ENCODE measurements at regions of chr2 and their contacts with region 1.

Region 1: DNA sequence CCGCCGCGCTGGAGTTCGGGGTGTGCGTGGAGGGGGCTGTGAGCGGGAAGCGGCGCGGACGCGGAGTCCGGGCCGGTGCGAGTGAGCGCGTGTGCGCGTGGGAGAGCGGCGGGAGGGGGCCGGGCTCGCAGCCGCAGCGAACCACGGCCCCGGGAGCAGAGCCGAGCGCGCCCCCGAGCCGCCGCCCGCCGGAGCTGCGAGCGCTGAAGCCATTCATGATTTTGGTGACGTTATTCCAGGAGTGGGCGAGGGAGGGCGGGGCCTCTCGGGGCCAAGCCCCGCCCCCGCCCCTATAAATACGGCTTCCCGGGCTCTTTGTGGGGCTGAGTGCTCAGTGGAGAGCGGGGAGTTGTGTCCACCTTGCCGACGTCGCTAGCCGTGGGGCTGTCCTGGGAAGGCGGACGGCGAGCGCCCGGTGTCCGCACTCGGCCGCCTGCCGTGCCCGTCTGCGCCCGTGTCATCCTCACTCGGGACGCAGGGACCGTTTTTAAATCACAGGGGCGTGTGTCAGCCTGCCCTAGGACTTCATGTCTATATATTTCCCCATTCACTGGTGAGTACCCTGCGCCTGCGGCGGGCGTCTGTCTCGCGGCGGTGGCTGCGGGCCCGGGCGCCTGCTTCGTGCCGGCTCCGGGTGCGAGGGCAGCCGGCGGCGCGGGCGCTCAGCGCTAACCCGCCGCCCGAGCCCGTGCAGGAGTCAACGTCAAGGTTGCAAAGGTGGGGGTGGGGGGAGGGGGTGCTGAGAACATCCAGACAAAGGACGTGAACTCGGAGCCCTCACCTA is at the start of gene LBH:
- DNase-seq: peak; percentile 41
- H3K4me3 ChIP-seq: peak within 1 kb of the TSS; percentile 80
- CTCF ChIP-seq: no peak

Region 2: GRCh38 chr2:30146438-30147147 is 84.8 kb before region 1 on chr2 and contains the start of gene YPEL5:
- CTCF ChIA-PET with region 1: interaction called, 5 read pairs
- POLR2A ChIA-PET with region 1: interaction called, 13 read pairs
- DNase-seq: peak; percentile 97
- H3K4me3 ChIP-seq: peak within 1 kb of the TSS; percentile 82
- CTCF ChIP-seq: no peak

Region 3: DNA sequence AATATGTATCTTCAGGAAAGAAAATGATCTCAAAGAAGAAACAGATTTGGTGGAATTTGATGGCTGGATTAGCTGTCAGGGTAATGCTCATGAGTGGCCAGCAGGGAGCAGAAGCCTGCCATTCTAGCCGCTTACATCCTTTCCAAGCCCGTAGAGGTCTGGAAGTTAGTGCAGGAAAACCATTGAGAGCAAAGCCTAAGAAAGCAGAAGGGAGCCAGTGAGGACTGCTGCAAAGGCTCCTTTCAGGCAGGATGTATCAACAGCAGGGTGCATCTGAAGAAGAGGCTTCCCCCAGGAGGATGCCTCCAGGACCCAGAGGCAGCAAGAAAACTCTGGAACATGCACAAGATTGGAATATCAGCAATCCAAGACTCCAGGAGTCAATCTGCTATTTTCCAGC is 23.0 kb before region 1 on chr2:
- CTCF ChIA-PET with region 1: interaction called, 71 read pairs
- POLR2A ChIA-PET with region 1: interaction called, 17 read pairs
- DNase-seq: peak; percentile 53
- H3K4me3 ChIP-seq: no peak overlapping the region
- CTCF ChIP-seq: peak; percentile 81

Region 4: GRCh38 chr2:30217644-30218337 is 13.6 kb before region 1 on chr2:
- CTCF ChIA-PET with region 1: interaction called, 12 read pairs
- POLR2A ChIA-PET with region 1: interaction called, 10 read pairs
- DNase-seq: no peak
- H3K4me3 ChIP-seq: no peak overlapping the region
- CTCF ChIP-seq: no peak

Region 5: GRCh38 chr2:30300456-30301221 is 69.2 kb after region 1 on chr2:
- CTCF ChIA-PET with region 1: interaction called, 3 read pairs
- POLR2A ChIA-PET with region 1: interaction called, 14 read pairs
- DNase-seq: peak; percentile 97
- H3K4me3 ChIP-seq: no peak overlapping the region
- CTCF ChIP-seq: no peak

Region 6: DNA sequence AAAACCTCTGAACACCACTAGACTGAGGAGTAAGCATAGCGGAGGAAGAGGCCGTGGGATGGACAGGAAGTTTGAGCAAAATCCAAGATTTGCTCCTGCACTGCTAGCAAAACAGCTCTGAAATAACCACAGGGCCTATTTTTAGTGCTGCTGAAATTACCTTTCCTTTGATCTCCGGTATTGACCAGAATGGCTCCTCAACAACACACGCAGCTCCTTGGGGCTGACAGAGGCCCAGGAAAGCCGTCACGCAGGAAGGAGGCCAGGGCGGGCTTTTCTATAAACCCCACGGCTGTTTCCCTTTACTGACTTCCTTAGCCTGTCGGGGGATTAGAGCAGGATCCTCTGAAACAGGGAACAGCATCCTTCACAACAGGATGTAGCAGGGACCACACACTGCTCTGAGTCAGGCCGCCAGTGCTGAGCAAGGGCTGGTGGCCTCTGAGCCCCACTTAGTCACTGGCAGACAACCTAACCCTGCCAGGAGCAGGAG is 134.8 kb after region 1 on chr2:
- CTCF ChIA-PET with region 1: no interaction called
- POLR2A ChIA-PET with region 1: interaction called, 17 read pairs
- DNase-seq: no peak
- H3K4me3 ChIP-seq: no peak overlapping the region
- CTCF ChIP-seq: no peak

Region 7: GRCh38 chr2:30511122-30512083 is 280.0 kb after region 1 on chr2:
- CTCF ChIA-PET with region 1: no interaction called
- POLR2A ChIA-PET with region 1: no interaction called
- DNase-seq: no peak
- H3K4me3 ChIP-seq: no peak overlapping the region
- CTCF ChIP-seq: no peak

Region 8: DNA sequence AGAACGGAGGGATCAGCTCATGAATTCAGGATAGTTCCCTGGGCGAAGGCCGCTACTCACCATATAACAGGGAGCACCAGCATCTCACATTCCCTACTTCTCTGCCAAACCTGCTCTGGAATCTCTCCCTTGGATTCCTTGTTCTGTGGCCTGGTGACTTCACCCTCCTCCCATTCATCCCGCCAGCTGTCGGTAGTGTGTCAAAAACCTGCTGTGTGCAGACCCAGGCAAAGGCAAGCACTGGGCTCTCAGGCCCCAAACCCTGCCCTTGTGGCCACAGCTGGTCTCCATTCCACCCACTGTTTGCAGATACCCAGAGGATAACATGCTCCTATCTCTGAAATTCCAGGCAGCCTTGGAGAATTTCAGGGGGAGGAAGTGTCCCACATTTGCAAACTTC is 424.3 kb after region 1 on chr2:
- CTCF ChIA-PET with region 1: no interaction called
- POLR2A ChIA-PET with region 1: interaction called, 13 read pairs
- DNase-seq: no peak
- H3K4me3 ChIP-seq: no peak overlapping the region
- CTCF ChIP-seq: no peak